CD8-positive, alpha-beta T cell (primary cell): ENCODE measurements at regions of chr9 and their contacts with region 1.

Region 1: DNA sequence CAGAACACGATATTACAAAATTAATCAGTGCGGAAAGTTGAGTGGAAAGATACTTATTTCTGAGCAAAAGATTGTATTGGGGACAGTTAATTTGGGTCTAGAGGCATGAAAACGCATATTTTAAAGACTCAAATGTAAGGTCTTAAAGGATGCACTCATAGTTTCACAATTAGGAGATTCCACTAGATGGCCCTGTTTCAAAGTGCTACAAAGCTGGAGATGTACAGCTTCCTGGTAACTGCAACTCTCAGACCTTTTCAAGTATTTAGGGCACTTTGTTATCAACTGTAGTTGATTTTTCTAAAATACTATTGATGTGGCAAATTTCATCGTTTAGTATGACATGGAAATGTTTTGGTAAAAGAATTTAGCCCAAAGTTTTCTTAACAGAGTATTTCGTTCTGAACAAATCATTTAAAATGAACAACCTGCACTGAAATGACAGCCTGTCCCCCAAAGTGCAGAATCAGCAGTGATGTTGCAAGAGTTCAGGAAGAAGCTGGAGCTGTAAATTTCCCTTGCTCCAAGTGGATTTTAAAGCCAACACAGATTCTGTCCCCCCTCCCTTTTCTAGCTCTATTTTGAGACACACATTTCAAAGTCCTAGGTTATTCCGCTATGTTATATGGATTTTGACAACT is 16.2 kb upstream of the NDUFB6 start:
- DNase-seq: peak in 2 of 9 experiments; percentile 21 to 38
- ATAC-seq: no peak
- H3K4me3 ChIP-seq: no peak overlapping the region
- H3K4me3 Mint-ChIP-seq: no peak overlapping the region
- H3K27ac ChIP-seq: no peak overlapping the region
- H3K27ac Mint-ChIP-seq: no peak overlapping the region
- H3K4me1 ChIP-seq: no peaks in the 10 kb centered on the region
- H3K4me1 Mint-ChIP-seq: no peaks in the 10 kb centered on the region
- H3K27me3 ChIP-seq: peaks cover 0 to 3% of the 10 kb centered on the region in 2 experiments
- H3K27me3 Mint-ChIP-seq: peaks cover 35% of the 10 kb centered on the region
- CTCF ChIP-seq: no peak

Region 2: DNA sequence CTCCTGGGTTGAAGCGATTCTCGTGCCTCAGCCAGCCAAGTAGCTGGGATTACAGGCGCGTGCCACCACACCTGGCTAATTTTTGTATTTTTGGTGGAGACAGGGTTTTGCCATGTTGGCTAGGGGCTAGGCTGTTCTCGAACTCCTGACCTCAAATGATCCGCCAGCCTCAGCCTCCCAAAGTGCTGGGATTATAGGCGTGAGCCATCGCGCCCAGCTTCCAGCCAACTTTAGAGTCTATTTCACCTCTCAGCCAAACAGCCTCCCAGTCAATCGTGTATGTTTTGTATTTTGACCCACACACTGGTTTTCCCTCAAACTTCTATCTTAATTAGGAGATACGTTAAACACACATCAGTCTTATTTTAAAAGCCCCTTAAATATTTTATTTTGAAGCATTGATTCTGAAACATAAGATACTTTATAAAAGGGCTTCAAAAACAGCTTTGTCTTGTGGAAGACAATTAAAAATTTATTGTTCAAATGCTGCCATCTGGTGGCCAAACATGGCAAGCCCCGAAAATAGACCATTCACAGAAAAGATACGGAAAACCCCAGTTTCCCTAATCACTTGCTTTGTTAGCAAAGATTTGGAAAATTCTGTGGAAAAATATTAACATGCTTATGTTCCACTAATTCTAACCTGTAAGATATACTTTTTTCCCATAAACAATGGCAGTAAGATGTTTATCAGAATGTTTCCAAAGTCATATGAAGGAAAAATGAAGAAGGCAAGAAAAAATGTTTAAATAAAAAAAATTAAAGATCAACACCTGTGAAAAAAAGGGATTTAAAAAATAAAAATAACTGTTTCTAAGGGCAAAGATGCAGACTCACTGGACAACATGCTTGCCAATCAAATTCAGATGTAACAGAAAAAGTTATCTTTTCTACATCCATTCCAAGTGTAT is 379.2 kb after region 1 on chr9:
- CTCF ChIA-PET with region 1: interaction called, 9 read pairs
- POLR2A ChIA-PET with region 1: no interaction called
- intact Hi-C with region 1: loop called (anchors 1 to 2 kb)
- DNase-seq: peak; percentile 8 to 69 (median 55)
- ATAC-seq: no peak
- H3K4me3 ChIP-seq: no peak overlapping the region
- H3K4me3 Mint-ChIP-seq: no peak overlapping the region
- H3K27ac ChIP-seq: no peak overlapping the region
- H3K27ac Mint-ChIP-seq: peak overlapping the region; percentile 34
- H3K4me1 ChIP-seq: no peaks in the 10 kb centered on the region
- H3K4me1 Mint-ChIP-seq: peaks cover 2% of the 10 kb centered on the region
- H3K27me3 ChIP-seq: no peaks in the 10 kb centered on the region
- H3K27me3 Mint-ChIP-seq: no peaks in the 10 kb centered on the region
- CTCF ChIP-seq: peak; percentile 84